Ascending aorta (tissue), 2 donors: ENCODE measurements at regions of chr7 and their contacts with region 1.

Region 1: GRCh38 chr7:99040104-99040958 is 103.6 kb downstream of the SMURF1 start:
- DNase-seq: peak; percentile 46 to 92
- H3K4me3 ChIP-seq: peak overlapping the region in 1 of 2 donors; percentile 25
- H3K27ac ChIP-seq: peak overlapping the region; percentile 79 to 87
- H3K4me1 ChIP-seq: peaks cover 3 to 31% of the 10 kb centered on the region in 2 donors
- H3K27me3 ChIP-seq: no peaks in the 10 kb centered on the region
- CTCF ChIP-seq: peak; percentile 68 to 85 (median 70)

Region 2: DNA sequence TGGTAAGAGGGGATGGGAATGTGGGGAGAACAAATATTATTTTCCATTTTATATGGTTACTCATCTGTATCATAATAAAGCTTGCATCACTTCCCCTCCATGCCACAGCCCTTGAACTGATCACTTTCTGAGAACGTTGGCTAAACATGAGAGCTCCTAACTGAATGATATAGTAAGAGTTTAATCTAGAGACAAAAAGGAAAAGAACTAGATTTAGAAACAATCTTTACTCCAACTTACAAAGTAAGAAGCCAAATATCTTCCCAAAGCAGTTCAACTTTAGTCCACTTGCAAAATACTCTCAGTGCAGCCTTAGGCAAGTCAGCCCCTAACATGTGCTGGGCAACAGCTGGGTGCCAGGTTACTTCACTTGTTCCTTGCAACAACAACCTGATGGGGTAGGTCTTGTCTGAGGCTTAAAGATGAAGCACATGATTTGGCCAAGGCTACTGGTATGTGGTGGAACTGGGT is 83.3 kb after region 1 on chr7:
- intact Hi-C with region 1: loop called (anchors 5 kb)
- DNase-seq: peak in 1 of 2 donors; percentile 75
- H3K4me3 ChIP-seq: no peak overlapping the region
- H3K27ac ChIP-seq: peak overlapping the region; percentile 77 to 89
- H3K4me1 ChIP-seq: peaks cover 36 to 68% of the 10 kb centered on the region in 2 donors
- H3K27me3 ChIP-seq: no peaks in the 10 kb centered on the region
- CTCF ChIP-seq: no peak

Region 3: GRCh38 chr7:99219985-99220384 is 179.7 kb after region 1 on chr7:
- intact Hi-C with region 1: loop called (anchors 5 kb)
- DNase-seq: no peak
- H3K4me3 ChIP-seq: no peak overlapping the region
- H3K27ac ChIP-seq: peak overlapping the region; percentile 45 to 55
- H3K4me1 ChIP-seq: peaks cover 0 to 1% of the 10 kb centered on the region in 2 donors
- H3K27me3 ChIP-seq: no peaks in the 10 kb centered on the region
- CTCF ChIP-seq: no peak

Region 4: DNA sequence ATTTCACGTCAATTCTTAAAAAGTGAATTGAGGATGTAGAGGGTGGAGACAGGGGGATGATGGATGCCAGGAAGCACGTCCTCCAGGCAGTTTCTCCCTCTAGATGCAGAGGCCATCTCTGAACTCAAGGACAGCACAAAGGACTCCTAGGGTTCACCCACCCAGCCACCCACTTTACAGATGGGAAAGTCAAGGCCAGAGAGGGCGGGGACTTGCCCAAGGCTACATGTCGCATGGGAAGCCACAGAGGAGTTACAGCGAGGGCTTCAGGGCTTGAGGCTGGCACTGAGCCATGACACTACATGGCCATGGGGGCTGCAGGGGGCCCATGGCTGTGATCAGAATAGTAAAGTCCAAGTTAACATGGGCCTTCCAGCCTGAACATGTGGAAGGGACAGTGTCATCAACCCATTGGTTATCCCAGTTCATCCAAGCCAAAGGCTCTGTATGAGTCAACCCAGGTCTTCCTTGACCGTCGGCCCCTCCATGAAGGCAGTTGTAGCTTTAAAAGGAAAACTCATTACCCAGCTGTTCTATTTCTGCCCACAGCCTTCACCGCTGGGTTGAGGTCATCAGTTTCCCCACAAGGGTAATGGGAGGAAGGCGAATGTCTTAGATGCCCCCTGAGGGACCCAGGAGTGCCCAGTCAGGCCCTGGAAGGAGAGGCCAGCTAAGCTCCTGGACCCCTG is 191.9 kb after region 1 on chr7:
- intact Hi-C with region 1: no loop called
- DNase-seq: no peak
- H3K4me3 ChIP-seq: no peak overlapping the region
- H3K27ac ChIP-seq: no peak overlapping the region
- H3K4me1 ChIP-seq: no peaks in the 10 kb centered on the region
- H3K27me3 ChIP-seq: no peaks in the 10 kb centered on the region
- CTCF ChIP-seq: no peak

Region 5: GRCh38 chr7:99267481-99267840 is 227.1 kb after region 1 on chr7:
- intact Hi-C with region 1: loop called (anchors 5 kb)
- DNase-seq: peak; percentile 32 to 78
- H3K4me3 ChIP-seq: no peak overlapping the region
- H3K27ac ChIP-seq: peak overlapping the region; percentile 63 to 68
- H3K4me1 ChIP-seq: peaks cover 0 to 13% of the 10 kb centered on the region in 2 donors
- H3K27me3 ChIP-seq: no peaks in the 10 kb centered on the region
- CTCF ChIP-seq: no peak

Region 6: GRCh38 chr7:99312316-99313203 is 272.2 kb after region 1 on chr7:
- intact Hi-C with region 1: loop called (anchors 1 kb)
- DNase-seq: peak in 1 of 2 donors; percentile 86
- H3K4me3 ChIP-seq: no peak overlapping the region
- H3K27ac ChIP-seq: no peak overlapping the region
- H3K4me1 ChIP-seq: peaks cover 0 to 5% of the 10 kb centered on the region in 2 donors
- H3K27me3 ChIP-seq: no peaks in the 10 kb centered on the region
- CTCF ChIP-seq: peak; percentile 83 to 91 (median 89)

Region 7: GRCh38 chr7:99551767-99552463 is 511.6 kb after region 1 on chr7 and contains the start of gene FAM200A:
- intact Hi-C with region 1: loop called (anchors 10 kb)
- DNase-seq: peak; percentile 15 to 92
- H3K4me3 ChIP-seq: peak within 1 kb of the TSS; percentile 94 to 97
- H3K27ac ChIP-seq: peak within 1 kb of the TSS; percentile 74 to 88
- H3K4me1 ChIP-seq: peaks cover 6 to 11% of the 10 kb centered on the region in 2 donors
- H3K27me3 ChIP-seq: no peaks in the 10 kb centered on the region
- CTCF ChIP-seq: no peak
- total RNA-seq, gene FAM200A: 0.64 TPM